ENCODE measurements at regions of chr12 and their contacts with region 1.

Region 1: GRCh38 chr12:31959161-31959700 is at the start of gene RESF1:
- DNase-seq: peak; percentile 76 to 92 (median 89)
- H3K4me3 ChIP-seq: peak within 1 kb of the TSS; percentile 87
- H3K4me3 Mint-ChIP-seq: peak within 1 kb of the TSS; percentile 85 to 100 (median 96)
- H3K27ac ChIP-seq: peak within 1 kb of the TSS; percentile 78
- H3K27ac Mint-ChIP-seq: peak within 1 kb of the TSS; percentile 90 to 98 (median 96)
- H3K4me1 ChIP-seq: peaks cover 39% of the 10 kb centered on the region
- H3K4me1 Mint-ChIP-seq: peaks cover 52 to 71% (median 71%) of the 10 kb centered on the region in 3 donors
- H3K27me3 ChIP-seq: no peaks in the 10 kb centered on the region
- H3K27me3 Mint-ChIP-seq: no peaks in the 10 kb centered on the region
- total RNA-seq, gene RESF1: 90.5 to 90.9 TPM

Region 2: DNA sequence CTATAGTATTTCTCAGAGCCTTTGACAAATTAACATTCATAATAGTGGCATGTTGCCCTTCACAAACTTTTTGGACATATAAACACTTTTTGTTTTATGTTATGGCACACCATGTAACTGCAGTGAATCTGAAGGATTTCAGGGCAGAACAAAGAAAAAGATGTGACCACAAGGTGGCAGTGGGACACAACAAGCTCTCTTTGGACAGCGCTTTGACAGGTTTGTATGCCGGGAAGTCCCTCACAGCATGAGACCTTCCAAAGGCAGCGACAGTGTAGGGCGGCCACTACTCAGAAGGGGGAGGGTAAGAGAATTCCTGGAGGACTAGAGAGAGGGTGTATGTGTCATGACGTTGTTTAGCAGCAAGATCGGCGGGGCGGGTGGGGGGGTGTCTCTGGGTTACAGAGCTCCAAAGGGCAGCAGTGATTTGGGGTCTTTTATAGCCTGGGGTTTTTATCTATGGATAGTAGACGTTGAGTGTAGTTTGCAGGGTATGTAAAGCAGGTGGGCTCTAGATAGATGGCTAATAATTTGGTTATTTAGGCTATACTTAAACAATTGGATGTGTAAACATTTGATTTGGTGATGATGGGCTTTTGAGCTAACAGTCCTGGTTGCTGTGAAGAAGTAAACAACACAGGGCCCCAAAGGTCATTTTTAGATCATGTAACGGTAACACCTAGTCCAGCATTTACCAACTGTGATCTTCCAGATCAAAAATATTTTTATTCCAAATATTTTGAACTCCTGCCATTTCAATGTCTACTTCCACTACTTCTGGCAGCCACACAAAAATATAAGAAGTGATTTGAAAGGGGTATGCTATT is 276.9 kb before region 1 on chr12:
- CTCF ChIA-PET with region 1: interaction called, 24 read pairs
- POLR2A ChIA-PET with region 1: interaction called, 4 read pairs
- DNase-seq: peak; percentile 49 to 77 (median 61)
- H3K4me3 ChIP-seq: no peak overlapping the region
- H3K4me3 Mint-ChIP-seq: peak overlapping the region in 5 of 7 donors; percentile 28 to 86 (median 68)
- H3K27ac ChIP-seq: no peak overlapping the region
- H3K27ac Mint-ChIP-seq: peak overlapping the region in 6 of 8 donors; percentile 55 to 90 (median 86)
- H3K4me1 ChIP-seq: peaks cover 3% of the 10 kb centered on the region
- H3K4me1 Mint-ChIP-seq: peaks cover 6 to 11% (median 7%) of the 10 kb centered on the region in 3 donors
- H3K27me3 ChIP-seq: no peaks in the 10 kb centered on the region
- H3K27me3 Mint-ChIP-seq: no peaks in the 10 kb centered on the region

Region 3: GRCh38 chr12:31804185-31804504 is 155.1 kb before region 1 on chr12:
- CTCF ChIA-PET with region 1: interaction called, 3 read pairs
- POLR2A ChIA-PET with region 1: interaction called, 11 read pairs
- DNase-seq: no peak
- H3K4me3 ChIP-seq: peak overlapping the region; percentile 12
- H3K4me3 Mint-ChIP-seq: peak overlapping the region; percentile 88 to 96 (median 91)
- H3K27ac ChIP-seq: peak overlapping the region; percentile 25
- H3K27ac Mint-ChIP-seq: peak overlapping the region; percentile 32 to 97 (median 92)
- H3K4me1 ChIP-seq: peaks cover 23% of the 10 kb centered on the region
- H3K4me1 Mint-ChIP-seq: peaks cover 40 to 73% (median 63%) of the 10 kb centered on the region in 3 donors
- H3K27me3 ChIP-seq: no peaks in the 10 kb centered on the region
- H3K27me3 Mint-ChIP-seq: no peaks in the 10 kb centered on the region

Region 4: DNA sequence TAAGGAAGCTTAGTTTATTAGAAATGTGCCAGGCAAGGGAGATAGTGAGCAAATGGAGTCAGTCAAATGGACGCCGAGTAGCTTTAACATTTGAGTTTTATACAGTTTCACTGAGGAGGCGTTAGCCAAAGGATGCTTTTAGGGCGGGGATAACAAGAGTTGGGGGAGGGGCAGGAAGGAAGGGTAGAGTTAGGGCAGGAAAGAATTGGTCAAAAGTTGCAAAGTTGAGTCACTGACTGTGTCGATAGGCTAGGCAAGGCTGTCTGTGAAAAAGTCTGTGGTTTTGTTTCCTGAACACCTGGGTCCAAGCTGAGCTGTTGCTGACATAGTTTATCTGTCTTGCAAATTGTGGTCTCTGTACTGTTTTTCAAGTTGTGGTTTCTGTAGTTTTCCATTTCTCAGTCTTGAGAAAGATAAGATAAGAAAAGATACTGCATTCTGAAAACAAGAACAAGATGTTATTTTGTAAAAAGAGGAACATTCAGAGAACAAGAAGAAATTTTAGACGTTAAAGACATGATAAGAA is 62.7 kb before region 1 on chr12:
- CTCF ChIA-PET with region 1: interaction called, 15 read pairs
- POLR2A ChIA-PET with region 1: interaction called, 30 read pairs
- DNase-seq: peak; percentile 66 to 94 (median 91)
- H3K4me3 ChIP-seq: no peak overlapping the region
- H3K4me3 Mint-ChIP-seq: peak overlapping the region; percentile 64 to 80 (median 72)
- H3K27ac ChIP-seq: peak overlapping the region; percentile 40
- H3K27ac Mint-ChIP-seq: peak overlapping the region; percentile 91 to 100 (median 94)
- H3K4me1 ChIP-seq: peaks cover 72% of the 10 kb centered on the region
- H3K4me1 Mint-ChIP-seq: peaks cover 50 to 74% (median 63%) of the 10 kb centered on the region in 3 donors
- H3K27me3 ChIP-seq: no peaks in the 10 kb centered on the region
- H3K27me3 Mint-ChIP-seq: no peaks in the 10 kb centered on the region

Region 5: GRCh38 chr12:32159925-32160324 is 200.7 kb after region 1 on chr12:
- CTCF ChIA-PET with region 1: no interaction called
- POLR2A ChIA-PET with region 1: no interaction called
- DNase-seq: peak in 2 of 5 donors; percentile 0 to 51
- H3K4me3 ChIP-seq: no peak overlapping the region
- H3K4me3 Mint-ChIP-seq: no peak overlapping the region
- H3K27ac ChIP-seq: no peak overlapping the region
- H3K27ac Mint-ChIP-seq: peak overlapping the region in 5 of 8 donors; percentile 17 to 56 (median 47)
- H3K4me1 ChIP-seq: no peaks in the 10 kb centered on the region
- H3K4me1 Mint-ChIP-seq: peaks cover 2 to 11% (median 10%) of the 10 kb centered on the region in 3 donors
- H3K27me3 ChIP-seq: no peaks in the 10 kb centered on the region
- H3K27me3 Mint-ChIP-seq: no peaks in the 10 kb centered on the region

Region 6: GRCh38 chr12:32252199-32253073 is 293.2 kb after region 1 on chr12:
- CTCF ChIA-PET with region 1: no interaction called
- POLR2A ChIA-PET with region 1: no interaction called
- DNase-seq: no peak
- H3K4me3 ChIP-seq: no peak overlapping the region
- H3K4me3 Mint-ChIP-seq: no peak overlapping the region
- H3K27ac ChIP-seq: no peak overlapping the region
- H3K27ac Mint-ChIP-seq: no peak overlapping the region
- H3K4me1 ChIP-seq: no peaks in the 10 kb centered on the region
- H3K4me1 Mint-ChIP-seq: peaks cover 4 to 10% (median 6%) of the 10 kb centered on the region in 3 donors
- H3K27me3 ChIP-seq: no peaks in the 10 kb centered on the region
- H3K27me3 Mint-ChIP-seq: no peaks in the 10 kb centered on the region